MCF 10A (cell line): ENCODE measurements at regions of chr3 and their contacts with region 1.

Region 1: GRCh38 chr3:119098619-119099222 is 47.2 kb upstream of the TEX55 start:
- DNase-seq: peak; percentile 56
- H3K4me3 Mint-ChIP-seq: no peak overlapping the region
- H3K27ac Mint-ChIP-seq: no peak overlapping the region
- H3K4me1 Mint-ChIP-seq: peaks cover 10% of the 10 kb centered on the region
- H3K27me3 Mint-ChIP-seq: no peaks in the 10 kb centered on the region
- CTCF ChIP-seq: peak; percentile 85

Region 2: DNA sequence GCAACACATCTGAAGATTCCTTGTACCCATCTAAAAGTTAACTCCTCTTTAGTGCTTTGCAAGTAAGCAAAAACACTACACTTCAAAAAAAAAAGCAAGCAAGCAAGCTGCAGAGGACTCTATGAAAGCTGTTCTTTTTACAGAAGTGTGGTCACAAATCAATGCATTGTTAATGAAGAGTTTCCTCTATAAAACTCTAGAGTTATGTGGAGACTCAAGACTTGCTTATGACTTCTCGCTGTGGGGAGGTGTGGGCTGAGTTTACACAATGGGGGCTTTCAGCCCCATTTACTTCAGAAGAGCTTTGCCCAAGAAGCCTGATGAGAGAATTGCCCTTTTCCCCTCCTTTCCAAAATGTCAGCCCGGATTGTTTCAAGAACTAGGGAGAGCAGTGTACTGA is 208.5 kb before region 1 on chr3:
- CTCF ChIA-PET with region 1: interaction called, 564 read pairs
- POLR2A ChIA-PET with region 1: interaction called, 7 read pairs
- intact Hi-C with region 1: no loop called
- DNase-seq: no peak
- H3K4me3 Mint-ChIP-seq: no peak overlapping the region
- H3K27ac Mint-ChIP-seq: no peak overlapping the region
- H3K4me1 Mint-ChIP-seq: no peaks in the 10 kb centered on the region
- H3K27me3 Mint-ChIP-seq: peaks cover 75% of the 10 kb centered on the region
- CTCF ChIP-seq: no peak

Region 3: GRCh38 chr3:119084371-119085072 is 14.2 kb before region 1 on chr3:
- CTCF ChIA-PET with region 1: interaction called, 13 read pairs
- POLR2A ChIA-PET with region 1: interaction called, 4 read pairs
- intact Hi-C with region 1: no loop called
- DNase-seq: peak; percentile 38
- H3K4me3 Mint-ChIP-seq: no peak overlapping the region
- H3K27ac Mint-ChIP-seq: no peak overlapping the region
- H3K4me1 Mint-ChIP-seq: peaks cover 6% of the 10 kb centered on the region
- H3K27me3 Mint-ChIP-seq: no peaks in the 10 kb centered on the region
- CTCF ChIP-seq: no peak